B cell (primary cell): ENCODE measurements at regions of chr4 and their contacts with region 1.

Region 1: DNA sequence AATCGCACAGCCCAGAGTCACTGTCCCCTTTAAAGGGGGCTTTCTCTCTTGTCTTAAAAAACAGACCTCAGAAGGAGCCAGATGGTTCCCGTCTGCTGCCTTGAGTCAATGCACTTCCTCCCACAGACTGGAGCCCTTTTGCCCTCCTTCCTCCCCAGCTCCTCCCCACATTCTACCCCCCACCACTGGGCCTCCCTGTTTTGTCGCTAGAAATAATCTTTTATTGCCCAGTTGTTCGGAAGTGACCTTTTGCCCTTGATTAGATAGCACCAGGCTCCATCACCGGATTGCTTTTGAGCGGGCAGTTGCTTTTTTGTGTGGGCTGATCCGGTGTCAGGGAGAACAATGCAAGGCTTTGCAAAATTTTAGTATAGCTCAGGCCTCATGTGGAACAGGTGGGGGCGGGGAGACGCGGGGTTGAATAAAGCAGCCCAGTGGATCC is 47.7 kb downstream of the SPRY1 start:
- DNase-seq: peak; percentile 78
- ATAC-seq: peak; percentile 78
- H3K4me3 ChIP-seq: peak overlapping the region; percentile 13 to 57 (median 41)
- H3K4me3 Mint-ChIP-seq: peak overlapping the region; percentile 80
- H3K27ac ChIP-seq: peak overlapping the region; percentile 66 to 96
- H3K27ac Mint-ChIP-seq: peak overlapping the region; percentile 83
- H3K4me1 ChIP-seq: peaks cover 53 to 55% of the 10 kb centered on the region in 2 donors
- H3K4me1 Mint-ChIP-seq: peaks cover 37% of the 10 kb centered on the region
- H3K27me3 ChIP-seq: no peaks in the 10 kb centered on the region
- H3K27me3 Mint-ChIP-seq: no peaks in the 10 kb centered on the region
- CTCF ChIP-seq: no peak

Region 2: GRCh38 chr4:123471655-123472369 is 27.5 kb after region 1 on chr4:
- CTCF ChIA-PET with region 1: no interaction called
- POLR2A ChIA-PET with region 1: no interaction called
- intact Hi-C with region 1: no loop called
- DNase-seq: no peak
- ATAC-seq: no peak
- H3K4me3 ChIP-seq: no peak overlapping the region
- H3K4me3 Mint-ChIP-seq: no peak overlapping the region
- H3K27ac ChIP-seq: no peak overlapping the region
- H3K27ac Mint-ChIP-seq: no peak overlapping the region
- H3K4me1 ChIP-seq: peaks cover 0 to 3% of the 10 kb centered on the region in 2 donors
- H3K4me1 Mint-ChIP-seq: peaks cover 6% of the 10 kb centered on the region
- H3K27me3 ChIP-seq: no peaks in the 10 kb centered on the region
- H3K27me3 Mint-ChIP-seq: no peaks in the 10 kb centered on the region
- CTCF ChIP-seq: no peak

Region 3: DNA sequence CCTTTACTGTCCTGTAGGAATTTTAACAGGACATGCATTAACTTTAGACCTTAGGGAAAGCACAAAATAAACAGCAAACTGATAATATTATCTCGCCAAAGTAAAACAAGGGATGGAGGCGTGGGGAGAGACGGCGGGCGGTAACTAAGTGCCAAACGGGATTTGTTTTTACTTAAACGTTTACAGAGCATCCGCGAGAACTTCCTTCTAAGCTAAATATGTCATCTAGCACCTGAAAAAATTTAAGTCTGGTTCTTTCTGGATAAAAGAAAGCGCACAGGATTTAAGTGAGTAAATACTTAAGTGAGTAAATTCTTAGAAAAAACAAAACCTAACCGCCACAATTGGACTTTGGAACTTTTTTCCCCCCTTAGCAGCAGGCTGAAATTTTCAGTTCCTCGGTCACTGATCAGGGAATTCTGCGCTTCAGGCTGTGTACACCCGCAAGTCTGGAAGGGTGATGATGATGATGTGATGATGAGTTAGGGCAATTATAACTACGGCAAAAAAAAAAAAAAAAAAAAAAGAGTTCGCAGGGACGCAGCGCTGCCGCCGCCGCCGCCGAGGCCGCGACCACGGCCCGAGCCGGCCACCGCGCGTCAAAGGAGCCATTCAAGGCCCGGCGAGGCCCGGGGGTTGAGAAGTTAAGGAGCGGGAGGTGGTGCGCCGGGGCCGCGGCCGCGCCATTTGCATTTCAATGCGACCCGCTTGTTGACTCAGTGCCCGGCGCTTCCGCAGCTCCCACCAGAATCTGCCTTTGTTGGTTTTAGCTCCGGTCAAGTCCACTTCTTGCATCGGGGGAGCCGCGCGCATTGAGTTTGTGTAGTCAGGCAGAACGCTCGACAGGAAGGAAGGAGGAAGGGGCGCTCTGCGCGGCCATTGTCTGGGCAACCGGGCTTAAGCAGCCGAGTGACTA is 61.0 kb after region 1 on chr4:
- CTCF ChIA-PET with region 1: no interaction called
- POLR2A ChIA-PET with region 1: no interaction called
- intact Hi-C with region 1: loop called (anchors 10 kb)
- DNase-seq: peak; percentile 45
- ATAC-seq: peak; percentile 49
- H3K4me3 ChIP-seq: peak overlapping the region; percentile 46 to 84 (median 60)
- H3K4me3 Mint-ChIP-seq: peak overlapping the region; percentile 95
- H3K27ac ChIP-seq: no peak overlapping the region
- H3K27ac Mint-ChIP-seq: peak overlapping the region; percentile 81
- H3K4me1 ChIP-seq: peaks cover 16 to 21% of the 10 kb centered on the region in 2 donors
- H3K4me1 Mint-ChIP-seq: peaks cover 26% of the 10 kb centered on the region
- H3K27me3 ChIP-seq: peaks cover 0 to 3% (median 0%) of the 10 kb centered on the region in 4 experiments
- H3K27me3 Mint-ChIP-seq: peaks cover 29% of the 10 kb centered on the region
- CTCF ChIP-seq: no peak